ENCODE measurements at regions of chr2 and their contacts with region 1.

Region 1: GRCh38 chr2:28674062-28674712 is 77.4 kb upstream of the PPP1CB start:
- DNase-seq: no peak
- H3K4me3 ChIP-seq: no peak overlapping the region
- H3K27ac ChIP-seq: peak overlapping the region; percentile 9 to 34
- H3K4me1 ChIP-seq: peaks cover 0 to 12% (median 0%) of the 10 kb centered on the region in 4 donors
- H3K27me3 ChIP-seq: no peaks in the 10 kb centered on the region
- CTCF ChIP-seq: no peak

Region 2: DNA sequence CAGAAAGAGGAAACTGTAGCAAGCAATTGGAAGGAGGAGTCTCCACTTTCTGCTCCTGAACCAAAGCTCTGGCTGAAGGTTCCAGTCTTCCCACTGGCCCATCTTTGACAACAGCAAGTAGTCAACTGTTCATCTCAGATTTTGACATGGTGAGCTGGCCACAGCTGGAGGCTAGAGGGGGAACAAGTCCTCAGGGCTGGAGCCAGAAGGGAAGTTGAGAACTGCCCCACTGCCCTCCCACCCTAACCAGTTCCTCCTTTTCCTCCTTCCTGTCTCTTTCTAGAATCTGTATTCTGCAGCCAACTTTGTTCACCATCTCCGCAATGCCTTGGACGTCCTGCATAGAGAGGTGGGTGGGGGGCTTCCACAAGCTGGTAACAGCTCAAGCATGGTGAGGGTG is 72.6 kb before region 1 on chr2:
- intact Hi-C with region 1: loop called (anchors 2 kb)
- DNase-seq: no peak
- H3K4me3 ChIP-seq: peak overlapping the region; percentile 14 to 23
- H3K27ac ChIP-seq: no peak overlapping the region
- H3K4me1 ChIP-seq: peaks cover 0 to 29% (median 19%) of the 10 kb centered on the region in 4 donors
- H3K27me3 ChIP-seq: no peaks in the 10 kb centered on the region
- CTCF ChIP-seq: no peak

Region 3: GRCh38 chr2:28915939-28916338 is 241.8 kb after region 1 on chr2:
- intact Hi-C with region 1: no loop called
- DNase-seq: no peak
- H3K4me3 ChIP-seq: no peak overlapping the region
- H3K27ac ChIP-seq: no peak overlapping the region
- H3K4me1 ChIP-seq: no peaks in the 10 kb centered on the region
- H3K27me3 ChIP-seq: no peaks in the 10 kb centered on the region
- CTCF ChIP-seq: no peak

Measured in tibial artery (tissue), 4 donors.